ENCODE measurements at regions of chr6 and their contacts with region 1.

Region 1: DNA sequence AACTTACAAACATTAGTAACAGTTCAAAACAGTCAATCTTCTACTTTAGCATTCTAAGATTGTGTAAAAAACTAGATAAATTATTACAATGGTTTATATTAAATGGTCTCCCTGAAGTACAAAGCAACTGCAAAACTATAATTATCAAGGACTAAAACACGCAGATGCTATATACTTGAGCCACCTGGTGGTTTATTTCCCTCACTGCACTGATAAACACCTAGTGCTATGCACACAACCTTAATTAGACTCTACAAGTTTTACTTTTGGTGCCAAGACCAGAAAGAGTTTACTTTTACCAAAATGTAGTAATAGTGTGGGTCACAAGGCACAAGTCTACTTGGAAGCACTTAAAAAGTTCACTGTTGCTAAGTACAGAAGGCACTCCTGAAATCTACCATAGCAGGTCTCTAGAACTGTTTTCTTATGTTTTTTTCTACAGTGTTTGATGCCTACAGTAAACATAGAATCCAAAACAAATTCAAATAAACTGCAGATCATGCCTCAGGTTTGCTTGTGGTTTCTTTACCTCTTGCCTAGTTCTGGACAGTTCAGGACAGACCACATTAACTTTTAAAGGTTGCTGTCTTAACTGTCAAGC is 49.2 kb downstream of the GMDS start:
- DNase-seq: peak in 6 of 9 donors; percentile 12 to 51 (median 36)
- ATAC-seq: peak; percentile 77
- H3K4me3 ChIP-seq: no peak overlapping the region
- H3K4me3 Mint-ChIP-seq: no peak overlapping the region
- H3K27ac ChIP-seq: no peak overlapping the region
- H3K27ac Mint-ChIP-seq: no peak overlapping the region
- H3K4me1 ChIP-seq: no peaks in the 10 kb centered on the region
- H3K4me1 Mint-ChIP-seq: peaks cover 0 to 4% (median 0%) of the 10 kb centered on the region in 7 donors
- H3K27me3 ChIP-seq: no peaks in the 10 kb centered on the region
- H3K27me3 Mint-ChIP-seq: peaks cover 0 to 10% (median 0%) of the 10 kb centered on the region in 5 donors

Region 2: DNA sequence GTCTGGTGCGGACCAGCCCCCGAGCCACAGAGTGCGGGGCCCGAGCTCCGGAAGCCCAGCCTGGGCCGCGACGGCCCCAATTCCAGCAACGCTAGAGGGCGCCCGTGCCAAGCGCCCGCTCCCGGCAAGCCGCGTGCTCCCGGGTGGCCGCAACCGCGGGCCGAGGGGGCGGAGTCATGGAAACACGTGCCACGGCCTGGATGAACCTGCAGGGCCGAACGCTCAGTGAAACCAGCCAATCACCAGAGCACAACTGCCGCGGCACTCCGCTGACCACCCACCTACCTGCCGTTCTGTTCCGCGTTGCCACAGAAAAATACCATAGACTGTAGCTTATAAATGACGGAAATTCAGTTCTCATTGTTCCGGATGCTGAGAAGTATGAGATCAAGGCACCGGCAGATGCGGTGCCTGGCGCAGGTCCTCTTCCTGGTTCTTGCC is 672.1 kb before region 1 on chr6:
- CTCF ChIA-PET with region 1: no interaction called
- POLR2A ChIA-PET with region 1: no interaction called
- intact Hi-C with region 1: loop called in 1 of 2 experiments (anchors 1 kb)
- DNase-seq: peak; percentile 58 to 82 (median 75)
- ATAC-seq: peak; percentile 89
- H3K4me3 ChIP-seq: peak overlapping the region; percentile 60
- H3K4me3 Mint-ChIP-seq: peak overlapping the region; percentile 64 to 87 (median 79)
- H3K27ac ChIP-seq: no peak overlapping the region
- H3K27ac Mint-ChIP-seq: peak overlapping the region; percentile 51 to 93 (median 90)
- H3K4me1 ChIP-seq: peaks cover 19 to 50% of the 10 kb centered on the region in 2 donors
- H3K4me1 Mint-ChIP-seq: peaks cover 35 to 58% (median 48%) of the 10 kb centered on the region in 7 donors
- H3K27me3 ChIP-seq: no peaks in the 10 kb centered on the region
- H3K27me3 Mint-ChIP-seq: peaks cover 0 to 16% (median 4%) of the 10 kb centered on the region in 5 donors

Region 3: GRCh38 chr6:1604158-1605030 is 591.8 kb before region 1 on chr6:
- CTCF ChIA-PET with region 1: interaction called, 3 read pairs
- POLR2A ChIA-PET with region 1: no interaction called
- intact Hi-C with region 1: loop called (anchors 1 kb)
- DNase-seq: peak in 8 of 9 donors; percentile 40 to 81 (median 71)
- ATAC-seq: peak; percentile 86
- H3K4me3 ChIP-seq: no peak overlapping the region
- H3K4me3 Mint-ChIP-seq: peak overlapping the region in 5 of 10 donors; percentile 25 to 74 (median 50)
- H3K27ac ChIP-seq: no peak overlapping the region
- H3K27ac Mint-ChIP-seq: no peak overlapping the region
- H3K4me1 ChIP-seq: peaks cover 15 to 35% of the 10 kb centered on the region in 2 donors
- H3K4me1 Mint-ChIP-seq: peaks cover 22 to 41% (median 36%) of the 10 kb centered on the region in 7 donors
- H3K27me3 ChIP-seq: peaks cover 8 to 26% of the 10 kb centered on the region in 2 donors
- H3K27me3 Mint-ChIP-seq: peaks cover 77 to 84% (median 80%) of the 10 kb centered on the region in 5 donors

Region 4: DNA sequence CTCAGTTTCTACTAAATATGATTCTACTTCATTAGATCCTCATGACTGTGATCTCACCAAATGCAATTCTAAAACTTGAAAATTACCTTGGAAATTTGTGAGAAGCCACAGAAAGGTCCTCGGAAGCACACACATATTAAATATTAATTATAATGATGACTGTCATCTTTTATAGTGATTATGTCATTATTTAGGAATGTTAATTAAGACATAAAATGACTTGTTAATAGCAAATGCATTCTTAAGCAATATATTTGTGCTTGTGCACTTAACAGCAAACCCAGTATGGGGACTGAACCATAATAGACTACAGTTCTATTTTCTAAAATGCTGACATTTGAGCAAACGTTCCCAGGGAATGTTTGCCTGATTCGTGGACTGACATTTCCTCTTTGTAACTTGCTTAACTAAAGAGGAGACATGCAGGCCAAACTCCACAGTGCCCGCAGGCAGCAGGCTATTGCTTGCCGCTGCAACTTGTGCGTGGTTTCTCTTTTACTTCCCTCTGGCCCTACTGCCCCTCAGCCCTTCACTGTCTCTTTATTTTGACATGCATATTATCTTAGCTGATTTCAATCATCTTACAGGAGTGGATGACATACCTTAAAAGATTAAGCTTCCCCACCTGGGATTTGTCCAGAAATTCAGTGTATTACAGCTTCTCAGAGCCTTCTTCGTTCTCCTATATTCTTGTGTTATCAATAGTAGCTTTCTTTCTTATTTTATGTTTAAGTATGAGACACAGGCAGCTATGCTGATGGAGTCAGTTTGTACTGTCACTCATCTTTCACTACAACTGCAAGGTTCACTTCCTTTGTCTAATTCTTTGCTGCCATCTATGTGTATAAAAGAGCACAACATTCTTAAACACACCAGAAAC is 92.3 kb before region 1 on chr6:
- CTCF ChIA-PET with region 1: interaction called, 3 read pairs
- POLR2A ChIA-PET with region 1: no interaction called
- intact Hi-C with region 1: loop called (anchors 1 to 2 kb)
- DNase-seq: peak in 6 of 9 donors; percentile 11 to 48 (median 30)
- ATAC-seq: peak; percentile 69
- H3K4me3 ChIP-seq: no peak overlapping the region
- H3K4me3 Mint-ChIP-seq: no peak overlapping the region
- H3K27ac ChIP-seq: no peak overlapping the region
- H3K27ac Mint-ChIP-seq: no peak overlapping the region
- H3K4me1 ChIP-seq: no peaks in the 10 kb centered on the region
- H3K4me1 Mint-ChIP-seq: peaks cover 0 to 3% (median 0%) of the 10 kb centered on the region in 7 donors
- H3K27me3 ChIP-seq: no peaks in the 10 kb centered on the region
- H3K27me3 Mint-ChIP-seq: no peaks in the 10 kb centered on the region

Region 5: GRCh38 chr6:2448820-2449571 is 252.8 kb after region 1 on chr6:
- CTCF ChIA-PET with region 1: no interaction called
- POLR2A ChIA-PET with region 1: no interaction called
- intact Hi-C with region 1: loop called in 1 of 2 experiments (anchors 1 kb)
- DNase-seq: no peak
- ATAC-seq: peak; percentile 61
- H3K4me3 ChIP-seq: no peak overlapping the region
- H3K4me3 Mint-ChIP-seq: peak overlapping the region in 6 of 10 donors; percentile 14 to 59 (median 54)
- H3K27ac ChIP-seq: no peak overlapping the region
- H3K27ac Mint-ChIP-seq: no peak overlapping the region
- H3K4me1 ChIP-seq: no peaks in the 10 kb centered on the region
- H3K4me1 Mint-ChIP-seq: peaks cover 0 to 6% (median 2%) of the 10 kb centered on the region in 7 donors
- H3K27me3 ChIP-seq: no peaks in the 10 kb centered on the region
- H3K27me3 Mint-ChIP-seq: peaks cover 0 to 11% (median 7%) of the 10 kb centered on the region in 5 donors

Measured in naive thymus-derived CD4-positive, alpha-beta T cell (primary cell).